ENCODE measurements at regions of chr12 and their contacts with region 1.

Region 1: DNA sequence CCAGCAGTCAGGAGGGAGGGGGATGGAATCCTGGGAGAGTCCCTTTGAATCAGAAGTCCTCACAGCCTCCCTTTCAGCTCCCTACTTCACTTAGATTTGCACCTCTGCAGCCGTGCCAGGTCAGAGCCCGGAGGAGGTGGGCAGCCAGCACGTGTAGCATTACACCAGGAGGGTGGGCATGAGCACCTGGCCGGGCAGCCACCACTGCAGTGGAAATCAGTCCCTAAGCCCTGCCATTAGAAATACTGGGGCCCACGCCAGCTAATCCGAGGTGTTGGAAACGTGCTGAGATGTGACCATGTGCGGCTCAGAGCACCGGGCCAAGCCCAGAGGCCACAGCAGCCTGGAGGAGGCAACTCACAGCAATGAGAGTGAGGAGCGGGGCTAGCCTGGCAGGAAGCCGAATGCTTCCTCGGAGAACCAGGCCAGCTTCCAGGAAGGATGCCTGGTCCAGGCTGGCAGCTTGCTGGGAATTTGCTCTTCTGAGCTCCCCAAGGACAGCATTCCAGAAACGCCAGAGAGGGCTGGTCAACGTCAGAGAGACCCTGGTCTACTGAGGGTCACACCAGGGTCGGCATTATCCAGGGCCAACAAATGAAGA is 9.4 kb upstream of the CACNA2D4 start:
- DNase-seq: no peak
- H3K4me3 ChIP-seq: no peak overlapping the region
- H3K27ac ChIP-seq: no peak overlapping the region
- H3K4me1 ChIP-seq: no peaks in the 10 kb centered on the region
- H3K27me3 ChIP-seq: peaks cover 4% of the 10 kb centered on the region
- CTCF ChIP-seq: no peak

Region 2: GRCh38 chr12:1836849-1837421 is 90.9 kb before region 1 on chr12:
- CTCF ChIA-PET with region 1: no interaction called
- dilution Hi-C with region 1: loop called (anchors 5 kb)
- in situ Hi-C with region 1: no loop called
- intact Hi-C with region 1: no loop called
- DNase-seq: no peak
- H3K4me3 ChIP-seq: no peak overlapping the region
- H3K27ac ChIP-seq: no peak overlapping the region
- H3K4me1 ChIP-seq: no peaks in the 10 kb centered on the region
- H3K27me3 ChIP-seq: peaks cover 2% of the 10 kb centered on the region
- CTCF ChIP-seq: no peak

Region 3: GRCh38 chr12:1885599-1886245 is 42.1 kb before region 1 on chr12:
- CTCF ChIA-PET with region 1: no interaction called
- dilution Hi-C with region 1: loop called (anchors 5 kb)
- in situ Hi-C with region 1: no loop called
- intact Hi-C with region 1: no loop called
- DNase-seq: no peak
- H3K4me3 ChIP-seq: no peak overlapping the region
- H3K27ac ChIP-seq: no peak overlapping the region
- H3K4me1 ChIP-seq: no peaks in the 10 kb centered on the region
- H3K27me3 ChIP-seq: peaks cover 5% of the 10 kb centered on the region
- CTCF ChIP-seq: no peak

Region 4: GRCh38 chr12:2009623-2010022 is 81.8 kb after region 1 on chr12:
- CTCF ChIA-PET with region 1: no interaction called
- dilution Hi-C with region 1: loop called (anchors 5 kb)
- in situ Hi-C with region 1: no loop called
- intact Hi-C with region 1: no loop called
- DNase-seq: no peak
- H3K4me3 ChIP-seq: no peak overlapping the region
- H3K27ac ChIP-seq: no peak overlapping the region
- H3K4me1 ChIP-seq: no peaks in the 10 kb centered on the region
- H3K27me3 ChIP-seq: no peaks in the 10 kb centered on the region
- CTCF ChIP-seq: peak in 1 of 2 donors; percentile 17

Region 5: GRCh38 chr12:2113119-2113912 is 185.5 kb after region 1 on chr12:
- CTCF ChIA-PET with region 1: no interaction called
- dilution Hi-C with region 1: no loop called
- in situ Hi-C with region 1: no loop called
- intact Hi-C with region 1: no loop called
- DNase-seq: no peak
- H3K4me3 ChIP-seq: no peak overlapping the region
- H3K27ac ChIP-seq: no peak overlapping the region
- H3K4me1 ChIP-seq: no peaks in the 10 kb centered on the region
- H3K27me3 ChIP-seq: no peaks in the 10 kb centered on the region
- CTCF ChIP-seq: no peak